ENCODE measurements at regions of chr4 and their contacts with region 1.

Region 1: DNA sequence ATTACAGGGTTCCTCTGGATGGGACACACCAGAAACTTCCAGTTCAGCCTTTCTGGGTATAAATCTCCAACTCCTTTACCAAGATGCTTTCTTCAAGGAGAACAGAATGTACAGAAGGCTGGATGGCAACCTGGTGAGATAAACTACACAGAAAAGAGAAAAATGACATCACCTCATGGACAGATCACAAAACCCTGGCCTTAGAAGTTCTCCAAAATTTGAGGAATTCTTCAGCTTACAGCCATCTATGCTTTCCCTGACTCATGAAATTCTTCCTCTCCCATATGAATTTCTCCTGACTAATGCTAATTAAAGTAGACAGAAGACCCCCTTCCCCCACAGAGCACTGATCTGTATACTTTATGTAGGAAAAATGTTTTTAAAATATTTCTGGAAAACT is 345.4 kb downstream of the STIM2 start:
- DNase-seq: no peak
- H3K4me3 ChIP-seq: no peak overlapping the region
- H3K27ac ChIP-seq: no peak overlapping the region
- H3K4me1 ChIP-seq: peaks cover 6% of the 10 kb centered on the region
- H3K27me3 ChIP-seq: no peaks in the 10 kb centered on the region
- CTCF ChIP-seq: no peak

Region 2: DNA sequence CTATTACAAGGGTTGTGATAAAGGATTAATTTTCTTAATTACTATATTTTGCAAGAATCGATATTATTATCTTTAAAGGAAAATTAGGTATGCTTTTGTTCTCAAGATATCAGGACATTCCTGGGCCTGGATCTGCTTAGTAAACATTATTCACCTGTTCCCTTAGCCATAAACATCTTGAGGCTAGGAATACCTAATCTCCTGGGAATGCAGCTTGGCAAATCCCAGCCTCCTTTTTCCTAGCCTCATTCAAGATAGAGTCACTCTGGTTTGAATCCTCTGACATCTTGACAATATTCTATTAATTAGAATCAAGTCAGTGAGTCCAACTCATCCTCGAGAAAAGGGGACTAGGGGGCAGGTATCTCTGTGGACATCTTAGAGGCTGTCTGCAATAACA is 18.2 kb before region 1 on chr4:
- CTCF ChIA-PET with region 1: no interaction called
- POLR2A ChIA-PET with region 1: no interaction called
- intact Hi-C with region 1: no loop called
- DNase-seq: no peak
- H3K4me3 ChIP-seq: no peak overlapping the region
- H3K27ac ChIP-seq: no peak overlapping the region
- H3K4me1 ChIP-seq: no peaks in the 10 kb centered on the region
- H3K27me3 ChIP-seq: no peaks in the 10 kb centered on the region
- CTCF ChIP-seq: no peak

Region 3: GRCh38 chr4:27270435-27270834 is 64.4 kb after region 1 on chr4:
- CTCF ChIA-PET with region 1: no interaction called
- POLR2A ChIA-PET with region 1: no interaction called
- intact Hi-C with region 1: loop called (anchors 2 kb)
- DNase-seq: no peak
- H3K4me3 ChIP-seq: no peak overlapping the region
- H3K27ac ChIP-seq: no peak overlapping the region
- H3K4me1 ChIP-seq: no peaks in the 10 kb centered on the region
- H3K27me3 ChIP-seq: no peaks in the 10 kb centered on the region
- CTCF ChIP-seq: no peak

Region 4: DNA sequence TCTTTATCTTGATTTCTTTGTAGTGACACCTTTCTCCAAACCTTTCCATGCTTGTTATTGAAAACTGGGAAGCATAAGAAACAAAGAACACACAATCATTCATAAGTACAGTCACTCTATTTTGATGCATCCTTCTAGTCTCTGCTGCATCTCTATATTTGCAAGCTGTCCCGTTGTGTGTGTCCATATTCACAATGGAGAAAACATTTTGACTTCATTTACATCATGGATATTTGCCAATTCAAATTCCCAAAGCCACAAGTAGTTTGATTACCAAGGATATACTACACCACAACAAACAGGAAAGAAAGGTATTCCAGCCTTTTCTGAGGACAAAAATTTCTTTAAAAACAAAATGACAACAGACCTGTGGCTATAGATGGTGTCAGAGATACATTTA is 328.5 kb after region 1 on chr4:
- CTCF ChIA-PET with region 1: no interaction called
- POLR2A ChIA-PET with region 1: no interaction called
- intact Hi-C with region 1: no loop called
- DNase-seq: no peak
- H3K4me3 ChIP-seq: no peak overlapping the region
- H3K27ac ChIP-seq: no peak overlapping the region
- H3K4me1 ChIP-seq: no peaks in the 10 kb centered on the region
- H3K27me3 ChIP-seq: no peaks in the 10 kb centered on the region
- CTCF ChIP-seq: no peak